Breast epithelium (tissue), 4 donors: ENCODE measurements at regions of chr1 and their contacts with region 1.

Region 1: DNA sequence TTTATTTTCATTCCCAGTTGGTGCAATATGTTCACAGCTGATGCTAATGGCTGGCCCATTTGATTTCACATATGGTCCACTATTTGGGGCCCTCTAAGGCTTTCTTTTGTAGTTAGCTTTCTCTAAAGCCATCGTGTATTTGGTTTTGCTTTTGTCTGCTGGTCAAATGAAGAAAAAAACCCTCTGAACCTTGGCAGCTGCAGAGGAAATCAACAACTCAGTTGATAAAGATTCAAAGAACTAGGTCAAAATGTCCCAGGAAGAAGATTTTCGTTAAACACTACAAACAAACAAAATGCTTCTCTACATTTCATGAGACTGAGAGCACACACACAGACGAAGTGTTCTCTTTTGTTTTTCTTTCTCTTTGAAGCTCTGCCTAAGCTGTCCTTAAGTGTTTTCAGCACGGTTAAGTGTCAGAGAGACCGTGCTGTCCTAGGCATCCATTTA is 655.0 kb downstream of the RWDD3 start:
- DNase-seq: no peak
- H3K4me3 ChIP-seq: peak overlapping the region in 2 of 3 donors; percentile 8 to 32
- H3K27ac ChIP-seq: no peak overlapping the region
- H3K4me1 ChIP-seq: no peaks in the 10 kb centered on the region
- H3K27me3 ChIP-seq: no peaks in the 10 kb centered on the region
- CTCF ChIP-seq: no peak
- POLR2A ChIP-seq: no peak

Region 2: GRCh38 chr1:95863086-95863485 is 25.9 kb before region 1 on chr1:
- intact Hi-C with region 1: loop called (anchors 2 kb)
- DNase-seq: no peak
- H3K4me3 ChIP-seq: no peak overlapping the region
- H3K27ac ChIP-seq: no peak overlapping the region
- H3K4me1 ChIP-seq: no peaks in the 10 kb centered on the region
- H3K27me3 ChIP-seq: no peaks in the 10 kb centered on the region
- CTCF ChIP-seq: no peak
- POLR2A ChIP-seq: no peak

Region 3: GRCh38 chr1:96901783-96902363 is 1012.9 kb after region 1 on chr1:
- intact Hi-C with region 1: no loop called
- DNase-seq: no peak
- H3K4me3 ChIP-seq: no peak overlapping the region
- H3K27ac ChIP-seq: no peak overlapping the region
- H3K4me1 ChIP-seq: no peaks in the 10 kb centered on the region
- H3K27me3 ChIP-seq: no peaks in the 10 kb centered on the region
- CTCF ChIP-seq: no peak
- POLR2A ChIP-seq: no peak